Thyroid gland (tissue), 4 donors: ENCODE measurements at regions of chr10 and their contacts with region 1.

Region 1: DNA sequence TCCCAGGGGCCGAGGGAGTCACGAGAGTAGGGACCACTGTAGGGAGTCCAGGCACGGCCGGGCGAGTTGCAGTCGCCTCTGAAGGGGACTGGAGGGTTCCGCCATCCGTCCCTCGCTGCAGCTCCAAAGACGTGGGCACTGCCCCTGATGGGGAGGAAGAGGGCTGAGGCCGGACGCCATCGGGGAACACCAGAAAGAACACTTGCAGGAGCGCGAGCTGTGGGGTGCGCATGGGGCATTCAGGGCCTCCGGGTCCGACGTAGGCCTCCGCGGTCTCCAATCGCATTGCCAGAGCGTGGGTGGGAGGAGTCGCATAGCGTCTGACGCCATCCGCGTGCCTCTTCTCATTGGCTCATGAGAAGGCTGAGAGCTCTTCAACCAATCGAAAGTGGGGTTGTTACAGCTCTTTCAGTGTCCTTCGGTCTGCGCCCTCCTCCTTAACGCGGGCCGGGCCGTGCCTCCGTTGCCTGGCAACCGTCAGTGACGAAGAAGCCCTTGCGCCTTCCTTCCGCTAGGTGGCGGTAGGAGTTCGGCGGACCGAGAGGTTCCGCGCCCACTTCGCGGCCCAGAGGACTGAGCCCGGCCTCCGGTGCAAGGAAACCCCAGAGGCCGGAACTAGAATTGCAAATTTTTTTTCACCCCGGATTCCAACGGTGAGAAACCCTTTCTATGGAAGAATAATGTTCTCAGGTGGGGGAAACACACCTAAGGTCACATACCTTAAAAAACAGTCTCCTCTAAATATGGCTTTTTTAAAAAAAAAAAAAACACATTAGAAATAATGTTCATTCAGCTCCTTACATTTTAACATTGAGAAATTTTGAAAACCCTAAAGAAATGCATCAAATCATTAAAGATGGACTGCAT is at the start of gene TCTN3:
- DNase-seq: peak; percentile 97 to 98
- H3K4me3 ChIP-seq: peak within 1 kb of the TSS; percentile 89 to 97 (median 92)
- H3K27ac ChIP-seq: peak within 1 kb of the TSS; percentile 43 to 78 (median 74)
- H3K4me1 ChIP-seq: peaks cover 15 to 17% of the 10 kb centered on the region in 2 donors
- H3K27me3 ChIP-seq: no peaks in the 10 kb centered on the region
- CTCF ChIP-seq: peak; percentile 96 to 100 (median 100)
- POLR2A ChIP-seq: peak; percentile 46 to 91
- total RNA-seq, gene TCTN3: 37.5 to 62.1 (median 51.8) TPM

Region 2: GRCh38 chr10:95626500-95626899 is 67.4 kb before region 1 on chr10:
- intact Hi-C with region 1: no loop called
- DNase-seq: no peak
- H3K4me3 ChIP-seq: no peak overlapping the region
- H3K27ac ChIP-seq: no peak overlapping the region
- H3K4me1 ChIP-seq: no peaks in the 10 kb centered on the region
- H3K27me3 ChIP-seq: no peaks in the 10 kb centered on the region
- CTCF ChIP-seq: no peak
- POLR2A ChIP-seq: no peak

Region 3: GRCh38 chr10:95841661-95842498 is 148.0 kb after region 1 on chr10:
- intact Hi-C with region 1: loop called (anchors 2 kb)
- DNase-seq: peak; percentile 48 to 50
- H3K4me3 ChIP-seq: no peak overlapping the region
- H3K27ac ChIP-seq: peak overlapping the region; percentile 26 to 69 (median 63)
- H3K4me1 ChIP-seq: peaks cover 16 to 22% of the 10 kb centered on the region in 2 donors
- H3K27me3 ChIP-seq: no peaks in the 10 kb centered on the region
- CTCF ChIP-seq: peak; percentile 36 to 94 (median 71)
- POLR2A ChIP-seq: no peak

Region 4: GRCh38 chr10:95864906-95865813 is 171.3 kb after region 1 on chr10:
- intact Hi-C with region 1: loop called (anchors 5 kb)
- DNase-seq: peak; percentile 44
- H3K4me3 ChIP-seq: no peak overlapping the region
- H3K27ac ChIP-seq: peak overlapping the region in 1 of 3 donors; percentile 15
- H3K4me1 ChIP-seq: no peaks in the 10 kb centered on the region
- H3K27me3 ChIP-seq: no peaks in the 10 kb centered on the region
- CTCF ChIP-seq: peak in 5 of 6 experiments; percentile 37 to 80 (median 73)
- POLR2A ChIP-seq: no peak

Region 5: DNA sequence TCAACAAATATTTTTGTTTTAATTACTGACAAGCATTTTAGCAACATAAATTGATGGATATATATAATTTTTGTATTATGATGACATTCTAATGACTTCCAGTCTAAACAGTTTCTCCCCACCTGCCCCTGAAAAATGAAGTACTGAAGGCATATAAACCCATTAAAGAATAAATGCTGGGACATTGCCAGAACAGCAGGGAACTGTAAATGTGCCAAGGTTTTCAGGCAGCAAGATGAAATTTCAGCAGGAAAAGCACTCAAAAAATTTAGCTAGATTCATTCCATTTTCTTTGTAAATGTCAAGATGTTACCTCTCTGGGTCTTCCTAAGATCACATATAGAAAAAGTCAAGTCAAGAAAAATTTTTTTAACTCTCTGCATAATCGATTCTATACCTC is 830.8 kb after region 1 on chr10:
- intact Hi-C with region 1: no loop called
- DNase-seq: no peak
- H3K4me3 ChIP-seq: no peak overlapping the region
- H3K27ac ChIP-seq: no peak overlapping the region
- H3K4me1 ChIP-seq: no peaks in the 10 kb centered on the region
- H3K27me3 ChIP-seq: no peaks in the 10 kb centered on the region
- CTCF ChIP-seq: no peak
- POLR2A ChIP-seq: no peak